Psoas muscle (tissue), 8 donors: ENCODE measurements at regions of chr13 and their contacts with region 1.

Region 1: GRCh38 chr13:113393563-113394338 is 29.8 kb upstream of the GRTP1 start:
- DNase-seq: peak; percentile 88 to 91
- ATAC-seq: peak; percentile 71 to 88 (median 75)
- H3K4me3 ChIP-seq: peak overlapping the region; percentile 84
- H3K27ac ChIP-seq: peak overlapping the region; percentile 73
- H3K4me1 ChIP-seq: peaks cover 9% of the 10 kb centered on the region
- H3K27me3 ChIP-seq: no peaks in the 10 kb centered on the region
- CTCF ChIP-seq: peak; percentile 92

Region 2: GRCh38 chr13:112942689-112943308 is 451.0 kb before region 1 on chr13:
- intact Hi-C with region 1: loop called in 1 of 2 experiments (anchors 5 kb)
- DNase-seq: peak; percentile 95 to 97
- ATAC-seq: peak; percentile 94 to 99 (median 96)
- H3K4me3 ChIP-seq: peak overlapping the region; percentile 69
- H3K27ac ChIP-seq: peak overlapping the region; percentile 10
- H3K4me1 ChIP-seq: peaks cover 3% of the 10 kb centered on the region
- H3K27me3 ChIP-seq: peaks cover 0 to 27% (median 2%) of the 10 kb centered on the region in 3 donors
- CTCF ChIP-seq: peak; percentile 94

Region 3: DNA sequence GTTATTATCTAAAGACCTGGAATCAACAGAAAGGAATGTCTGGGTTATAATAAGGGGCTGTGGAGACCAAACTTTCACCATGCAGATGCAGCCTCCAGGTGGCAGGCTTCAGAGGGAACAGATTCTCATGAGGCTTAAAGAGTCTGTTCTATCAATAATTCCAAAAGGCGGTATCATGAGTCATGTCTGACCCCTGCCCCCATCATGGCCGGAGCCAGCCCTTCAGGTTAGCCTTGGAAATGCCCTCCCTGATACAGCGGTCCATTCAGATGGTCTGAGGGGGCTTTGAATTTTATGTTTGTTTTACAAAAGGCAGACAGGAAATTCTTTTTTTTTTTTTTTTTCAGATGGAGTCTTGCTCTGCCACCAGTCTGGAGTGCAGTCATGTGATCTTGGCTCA is 118.4 kb before region 1 on chr13:
- intact Hi-C with region 1: loop called (anchors 2 to 5 kb)
- DNase-seq: peak; percentile 41 to 66
- ATAC-seq: peak; percentile 78 to 93 (median 85)
- H3K4me3 ChIP-seq: no peak overlapping the region
- H3K27ac ChIP-seq: no peak overlapping the region
- H3K4me1 ChIP-seq: no peaks in the 10 kb centered on the region
- H3K27me3 ChIP-seq: no peaks in the 10 kb centered on the region
- CTCF ChIP-seq: peak; percentile 62

Region 4: GRCh38 chr13:113327766-113328471 is 65.8 kb before region 1 on chr13:
- intact Hi-C with region 1: loop called in 1 of 2 experiments (anchors 5 kb)
- DNase-seq: peak in 1 of 2 donors; percentile 70
- ATAC-seq: peak; percentile 79 to 88 (median 84)
- H3K4me3 ChIP-seq: peak overlapping the region; percentile 27
- H3K27ac ChIP-seq: peak overlapping the region; percentile 90
- H3K4me1 ChIP-seq: peaks cover 18% of the 10 kb centered on the region
- H3K27me3 ChIP-seq: no peaks in the 10 kb centered on the region
- CTCF ChIP-seq: no peak

Region 5: GRCh38 chr13:113445791-113446487 is 52.2 kb after region 1 on chr13:
- intact Hi-C with region 1: no loop called
- DNase-seq: peak in 1 of 2 donors; percentile 42
- ATAC-seq: no peak
- H3K4me3 ChIP-seq: no peak overlapping the region
- H3K27ac ChIP-seq: no peak overlapping the region
- H3K4me1 ChIP-seq: peaks cover 27% of the 10 kb centered on the region
- H3K27me3 ChIP-seq: no peaks in the 10 kb centered on the region
- CTCF ChIP-seq: no peak